ENCODE measurements at regions of chr9 and their contacts with region 1.

Region 1: GRCh38 chr9:74025402-74025894 is 471.7 kb upstream of the RORB start:
- DNase-seq: no peak
- ATAC-seq: no peak
- H3K4me3 Mint-ChIP-seq: no peak overlapping the region
- H3K27ac Mint-ChIP-seq: no peak overlapping the region
- H3K4me1 Mint-ChIP-seq: no peaks in the 10 kb centered on the region
- H3K27me3 Mint-ChIP-seq: no peaks in the 10 kb centered on the region
- CTCF ChIP-seq: no peak

Region 2: DNA sequence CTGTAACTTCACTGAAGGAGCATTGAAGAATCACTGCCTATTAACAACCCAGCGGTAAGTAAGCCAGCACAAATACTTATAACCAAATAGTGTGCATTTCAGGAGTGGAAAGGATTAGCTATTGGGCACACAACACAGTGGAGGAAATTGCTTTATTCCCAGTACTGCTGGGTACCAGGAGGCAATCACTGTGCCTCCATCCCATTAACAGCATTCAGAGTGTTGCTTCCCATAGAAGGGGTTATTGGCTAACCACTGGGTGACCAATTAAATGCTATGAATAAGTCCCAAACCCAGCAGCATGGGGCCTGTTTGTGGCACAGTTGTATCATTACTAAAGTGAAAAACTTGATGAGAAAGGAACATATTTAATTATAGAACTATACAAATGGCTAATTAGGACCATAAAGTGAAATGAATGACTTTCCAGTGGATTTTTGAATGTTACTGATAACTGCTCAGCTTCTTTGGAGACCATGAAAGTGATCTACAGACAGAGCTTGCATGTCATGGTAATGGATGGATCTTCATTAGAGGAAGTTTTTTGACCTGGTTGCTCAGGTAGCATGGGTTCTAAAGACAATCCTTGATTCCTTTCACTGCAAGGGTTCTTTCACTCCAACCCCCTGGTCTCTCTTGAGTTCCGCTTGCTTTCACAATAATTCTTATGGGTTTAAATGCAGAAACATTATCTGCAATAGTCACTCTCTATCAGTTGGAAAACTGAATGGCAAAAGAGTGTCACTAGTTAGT is 58.4 kb after region 1 on chr9:
- CTCF ChIA-PET with region 1: no interaction called
- POLR2A ChIA-PET with region 1: no interaction called
- intact Hi-C with region 1: loop called (anchors 10 kb)
- DNase-seq: no peak
- ATAC-seq: no peak
- H3K4me3 Mint-ChIP-seq: no peak overlapping the region
- H3K27ac Mint-ChIP-seq: no peak overlapping the region
- H3K4me1 Mint-ChIP-seq: no peaks in the 10 kb centered on the region
- H3K27me3 Mint-ChIP-seq: no peaks in the 10 kb centered on the region
- CTCF ChIP-seq: no peak

Measured in activated B cell treated with CpG ODN at 0.5 μM for 24 hours (primary cell).